IMR-90 (cell line): ENCODE measurements at regions of chr6 and their contacts with region 1.

Region 1: GRCh38 chr6:82270881-82271645 is 23.5 kb upstream of the IBTK start:
- DNase-seq: peak; percentile 52
- ATAC-seq: no peak
- H3K4me3 ChIP-seq: no peak overlapping the region
- H3K27ac ChIP-seq: no peak overlapping the region
- H3K4me1 ChIP-seq: no peaks in the 10 kb centered on the region
- H3K27me3 ChIP-seq: peaks cover 5% of the 10 kb centered on the region; the same call in 1 of the 2 replicates
- CTCF ChIP-seq: peak; percentile 75
- POLR2A ChIP-seq: no peak
- RAD21 ChIP-seq: peak; percentile 79

Region 2: DNA sequence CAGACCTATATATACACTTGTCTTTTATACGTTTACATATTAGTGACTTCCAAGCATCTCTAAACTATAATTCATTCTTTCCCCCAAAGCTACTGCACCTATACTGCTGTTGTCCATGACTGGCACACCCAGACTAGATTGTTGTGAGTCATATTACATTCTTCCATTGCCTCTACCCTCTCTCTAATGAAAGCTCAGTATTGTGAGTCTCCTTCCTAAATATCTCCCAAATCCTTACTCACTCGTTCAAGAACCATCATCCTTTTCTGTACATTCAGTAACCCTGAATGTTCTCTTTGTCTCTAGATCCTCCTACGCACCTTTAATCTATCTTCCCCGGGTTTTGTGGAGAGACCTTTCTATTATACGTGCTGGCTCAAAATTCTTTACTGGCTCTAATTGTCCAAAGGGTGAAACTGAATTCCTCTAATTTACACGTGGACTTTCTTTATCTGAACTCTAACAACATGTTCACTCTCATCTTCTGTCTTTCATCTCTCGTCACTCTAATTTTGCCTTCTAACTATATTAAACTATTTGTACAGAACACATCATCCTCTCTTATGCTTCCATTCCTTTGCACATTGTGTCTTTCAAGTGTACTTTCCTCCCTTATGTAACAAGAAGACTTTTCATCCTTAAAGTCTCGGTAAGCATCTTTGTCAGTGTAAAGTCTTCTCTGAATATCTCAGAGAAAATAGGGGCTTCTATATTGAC is 132.8 kb before region 1 on chr6:
- CTCF ChIA-PET with region 1: no interaction called
- POLR2A ChIA-PET with region 1: no interaction called
- dilution Hi-C with region 1: no loop called
- in situ Hi-C with region 1: no loop called
- intact Hi-C with region 1: no loop called
- DNase-seq: no peak
- ATAC-seq: no peak
- H3K4me3 ChIP-seq: no peak overlapping the region
- H3K27ac ChIP-seq: no peak overlapping the region
- H3K4me1 ChIP-seq: no peaks in the 10 kb centered on the region
- H3K27me3 ChIP-seq: no peaks in the 10 kb centered on the region
- CTCF ChIP-seq: no peak
- POLR2A ChIP-seq: no peak
- RAD21 ChIP-seq: no peak

Region 3: GRCh38 chr6:82363351-82364086 is 92.5 kb after region 1 on chr6 and contains the start of gene TPBG:
- CTCF ChIA-PET with region 1: interaction called, 4 read pairs
- POLR2A ChIA-PET with region 1: no interaction called
- dilution Hi-C with region 1: no loop called
- in situ Hi-C with region 1: no loop called
- intact Hi-C with region 1: loop called (anchors 5 kb)
- DNase-seq: peak; percentile 82
- ATAC-seq: peak; percentile 67
- H3K4me3 ChIP-seq: peak within 1 kb of the TSS; percentile 68
- H3K27ac ChIP-seq: peak within 1 kb of the TSS; percentile 98
- H3K4me1 ChIP-seq: peaks cover 8% of the 10 kb centered on the region
- H3K27me3 ChIP-seq: no peaks in the 10 kb centered on the region
- CTCF ChIP-seq: peak; percentile 34
- POLR2A ChIP-seq: peak; percentile 92
- RAD21 ChIP-seq: peak; percentile 23; the same call in 1 of the 2 replicates
- total RNA-seq, gene TPBG: 19.7 and 20.0 TPM in 2 replicates

Region 4: DNA sequence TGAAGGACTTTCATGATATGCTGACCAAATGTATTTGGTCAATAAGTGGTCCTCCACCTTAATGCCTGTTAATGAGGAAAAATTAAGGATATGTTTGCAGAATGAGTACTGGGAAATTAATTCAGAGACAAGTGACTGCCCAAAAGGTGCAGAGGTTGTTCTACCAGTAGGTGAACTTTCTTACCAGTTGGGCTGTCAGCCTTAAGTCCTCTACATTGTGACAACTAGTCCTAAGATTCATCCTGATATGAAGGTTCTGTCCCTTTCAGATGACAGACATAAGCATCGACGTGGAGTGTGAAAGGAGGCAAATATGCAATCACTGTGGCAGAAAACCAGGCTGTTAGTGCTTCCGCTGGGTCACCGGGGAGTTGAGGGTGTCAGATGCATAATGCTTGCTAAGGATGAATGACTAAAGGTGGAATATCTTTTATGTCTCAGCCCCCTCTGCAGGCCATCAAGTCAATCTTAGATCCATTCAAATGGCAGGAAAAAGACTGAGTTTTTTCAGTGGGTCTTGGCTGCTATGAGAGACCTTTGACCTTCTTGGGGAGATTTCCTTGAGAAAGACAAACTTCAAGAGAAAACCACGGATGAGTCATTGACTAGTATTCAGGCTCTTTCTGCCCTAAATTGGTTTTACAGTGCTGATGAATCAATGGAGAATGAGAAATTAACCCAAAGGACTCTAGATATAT is 318.6 kb after region 1 on chr6:
- CTCF ChIA-PET with region 1: no interaction called
- POLR2A ChIA-PET with region 1: no interaction called
- dilution Hi-C with region 1: no loop called
- in situ Hi-C with region 1: no loop called
- intact Hi-C with region 1: loop called (anchors 5 kb)
- DNase-seq: peak; percentile 64
- ATAC-seq: peak; percentile 21; the same call in 1 of the 2 replicates
- H3K4me3 ChIP-seq: no peak overlapping the region
- H3K27ac ChIP-seq: no peak overlapping the region
- H3K4me1 ChIP-seq: no peaks in the 10 kb centered on the region
- H3K27me3 ChIP-seq: peaks cover 2% of the 10 kb centered on the region; the same call in 1 of the 2 replicates
- CTCF ChIP-seq: peak; percentile 37
- POLR2A ChIP-seq: no peak
- RAD21 ChIP-seq: peak; percentile 40

Region 5: DNA sequence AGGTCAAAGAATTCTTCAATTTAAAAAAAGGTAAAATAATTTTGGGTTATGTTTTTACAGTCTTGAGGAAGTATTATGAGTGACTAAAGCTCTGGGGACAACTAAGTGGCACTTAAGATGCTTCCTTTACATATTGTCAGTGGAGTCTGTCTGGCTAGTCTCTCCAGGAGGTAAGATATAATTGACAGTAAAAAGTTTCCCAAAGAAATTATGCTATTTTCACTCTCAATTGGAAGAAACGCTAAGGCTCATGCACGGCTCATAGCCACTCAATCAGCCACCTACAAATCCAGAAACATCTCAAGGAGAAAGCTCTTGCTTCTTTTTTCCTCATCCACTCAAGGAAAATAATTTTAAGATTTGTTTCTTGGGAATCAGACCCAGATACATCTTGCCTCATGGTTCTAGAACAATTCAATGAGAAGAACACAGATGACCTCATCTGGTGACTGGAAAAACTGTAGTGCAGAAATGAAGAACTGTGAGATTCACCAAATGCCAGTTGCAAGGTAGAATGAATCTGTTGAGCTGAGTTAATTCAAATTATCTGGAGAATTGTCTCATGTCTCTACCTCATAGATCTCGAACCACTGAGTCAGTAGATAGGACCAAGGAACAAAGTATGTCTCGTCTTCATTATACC is 345.4 kb after region 1 on chr6:
- CTCF ChIA-PET with region 1: no interaction called
- POLR2A ChIA-PET with region 1: no interaction called
- dilution Hi-C with region 1: no loop called
- in situ Hi-C with region 1: no loop called
- intact Hi-C with region 1: loop called (anchors 2 kb)
- DNase-seq: peak; percentile 2
- ATAC-seq: no peak
- H3K4me3 ChIP-seq: no peak overlapping the region
- H3K27ac ChIP-seq: no peak overlapping the region
- H3K4me1 ChIP-seq: no peaks in the 10 kb centered on the region
- H3K27me3 ChIP-seq: no peaks in the 10 kb centered on the region
- CTCF ChIP-seq: peak; percentile 26; the same call in 1 of the 2 replicates
- POLR2A ChIP-seq: no peak
- RAD21 ChIP-seq: peak; percentile 37